ENCODE measurements at regions of chr17 and their contacts with region 1.

Region 1: GRCh38 chr17:46139432-46140210 is 53.6 kb downstream of the KANSL1 start:
- DNase-seq: no peak
- H3K4me3 Mint-ChIP-seq: no peak overlapping the region
- H3K27ac Mint-ChIP-seq: no peak overlapping the region
- H3K4me1 Mint-ChIP-seq: peaks cover 76% of the 10 kb centered on the region
- H3K27me3 Mint-ChIP-seq: no peaks in the 10 kb centered on the region

Region 2: DNA sequence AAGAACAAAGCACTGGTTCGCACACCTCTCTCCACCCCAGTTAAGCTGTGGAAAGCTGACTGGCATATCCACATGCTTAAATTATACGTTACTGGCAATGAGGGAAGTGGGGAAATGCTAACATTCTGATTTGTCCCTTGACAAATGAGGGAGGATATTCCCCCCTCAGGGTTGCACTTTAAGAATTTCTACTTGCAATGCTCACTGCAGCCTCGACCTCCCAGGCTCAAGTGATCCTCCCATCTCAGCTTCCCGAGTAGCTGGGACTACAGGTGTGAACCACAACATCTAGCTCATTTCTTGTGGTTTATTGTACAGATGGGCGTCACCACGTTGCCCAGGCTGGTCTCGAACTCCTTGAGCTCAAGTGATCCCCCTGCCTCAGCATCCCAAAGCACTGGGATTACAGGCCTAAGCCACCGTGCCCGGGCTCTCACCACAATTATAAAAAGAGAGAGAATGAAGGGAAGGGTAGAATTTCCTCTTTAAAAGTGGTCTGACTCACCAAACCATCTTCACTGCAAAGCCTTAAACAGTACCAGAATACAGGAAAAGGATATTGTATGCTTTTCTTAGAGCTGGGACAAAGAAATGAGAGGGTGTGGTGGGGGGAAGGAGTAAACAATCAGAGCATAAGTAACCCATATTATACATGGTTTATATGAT is 14.7 kb after region 1 on chr17:
- CTCF ChIA-PET with region 1: interaction called, 16 read pairs
- POLR2A ChIA-PET with region 1: interaction called, 20 read pairs
- DNase-seq: peak; percentile 51
- H3K4me3 Mint-ChIP-seq: peak overlapping the region; percentile 55
- H3K27ac Mint-ChIP-seq: peak overlapping the region; percentile 87
- H3K4me1 Mint-ChIP-seq: peaks cover 76% of the 10 kb centered on the region
- H3K27me3 Mint-ChIP-seq: no peaks in the 10 kb centered on the region

Measured in activated CD4-positive, alpha-beta memory T cell treated with anti-CD3 and anti-CD28 coated beads, Interleukin-2, amount 10 ng/mL, durations not matched to agents 7 days and 5 days (primary cell).